Heart right ventricle (tissue), 16 donors: ENCODE measurements at regions of chr9 and their contacts with region 1.

Region 1: DNA sequence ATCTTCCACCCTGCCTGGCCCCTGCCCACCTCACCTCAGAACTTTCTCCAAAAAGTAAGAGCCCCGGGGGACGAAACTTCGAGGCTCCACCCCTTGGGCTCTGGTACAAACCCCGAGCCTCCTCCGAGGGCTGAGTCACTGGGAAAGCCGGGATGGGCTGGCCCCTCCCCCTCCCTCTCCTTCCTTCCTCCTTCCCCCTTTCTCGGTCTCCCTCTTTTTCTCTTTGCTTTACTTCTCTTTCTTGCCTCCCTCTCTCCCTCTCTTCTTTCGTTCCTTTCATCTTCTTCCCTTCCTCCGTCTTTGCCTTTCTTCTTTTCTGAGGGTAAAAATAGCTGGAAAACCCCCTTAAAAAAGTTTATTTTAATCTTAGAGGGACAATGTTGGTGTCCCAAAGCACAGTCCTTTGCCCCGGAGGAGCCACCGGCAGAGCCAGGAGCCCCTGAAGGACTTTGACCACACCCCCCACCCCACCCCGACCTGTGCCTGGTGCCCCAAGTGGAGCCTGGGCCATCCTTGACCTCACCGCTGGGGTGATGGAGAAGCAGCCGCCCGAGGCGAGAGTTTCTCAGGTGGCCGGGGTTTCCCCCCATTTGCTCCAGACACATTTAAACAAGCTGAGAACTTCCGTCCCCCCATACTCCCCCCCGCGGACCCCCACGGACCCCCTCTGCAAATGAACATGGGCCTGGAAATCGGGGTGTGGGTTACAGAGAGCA is 5.7 kb upstream of the NOTCH1 start:
- DNase-seq: peak; percentile 78 to 79
- ATAC-seq: peak in 6 of 8 donors; percentile 27 to 50 (median 36)
- H3K4me3 ChIP-seq: peak overlapping the region in 3 of 10 donors; percentile 19 to 24 (median 22)
- H3K27ac ChIP-seq: peak overlapping the region in 8 of 10 donors; percentile 11 to 88 (median 68)
- H3K4me1 ChIP-seq: peaks cover 8 to 54% (median 38%) of the 10 kb centered on the region in 9 donors
- H3K27me3 ChIP-seq: no peaks in the 10 kb centered on the region
- CTCF ChIP-seq: no peak

Region 2: GRCh38 chr9:136109351-136110081 is 442.0 kb before region 1 on chr9:
- intact Hi-C with region 1: no loop called
- DNase-seq: peak; percentile 92 to 94
- ATAC-seq: peak; percentile 88 to 94 (median 91)
- H3K4me3 ChIP-seq: peak overlapping the region in 9 of 10 donors; percentile 18 to 51 (median 44)
- H3K27ac ChIP-seq: peak overlapping the region; percentile 37 to 91 (median 80)
- H3K4me1 ChIP-seq: peaks cover 32 to 76% (median 61%) of the 10 kb centered on the region in 9 donors
- H3K27me3 ChIP-seq: peaks cover 0 to 5% (median 0%) of the 10 kb centered on the region in 7 donors
- CTCF ChIP-seq: peak in 5 of 9 donors; percentile 4 to 39 (median 15)

Region 3: DNA sequence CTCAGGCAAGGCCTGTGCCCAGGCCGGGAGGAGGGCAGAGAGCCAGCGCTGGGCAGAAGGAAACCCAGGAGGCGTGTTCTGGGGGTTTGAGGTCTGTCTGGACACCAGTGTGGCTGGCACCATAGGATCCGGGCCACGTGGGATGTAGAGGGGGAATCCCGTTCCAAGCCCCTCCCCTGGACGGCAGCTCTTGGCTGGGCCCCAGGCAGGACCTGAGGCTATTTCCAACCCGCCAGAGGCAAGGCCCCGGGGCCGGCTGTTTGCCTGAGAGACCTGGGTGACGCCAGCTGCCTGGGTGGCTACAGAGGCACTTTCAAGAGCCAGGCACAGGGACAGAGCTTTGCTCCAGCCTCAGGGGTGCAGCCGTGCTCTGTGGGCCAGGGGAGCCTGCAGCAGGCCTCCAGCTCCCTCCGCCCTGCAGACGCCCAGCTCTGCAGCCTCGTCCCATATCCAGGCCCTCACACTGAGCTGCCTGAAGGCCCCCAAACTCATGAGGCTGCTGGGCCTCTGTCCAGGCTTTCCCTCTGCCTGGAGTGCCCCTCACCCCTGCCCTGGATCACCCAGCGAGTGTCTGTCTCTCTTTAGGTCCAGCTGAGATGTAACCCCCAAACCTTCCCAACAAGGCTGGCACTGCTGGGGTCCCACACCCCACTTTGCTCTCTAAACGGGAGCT is 54.6 kb after region 1 on chr9:
- intact Hi-C with region 1: loop called in 3 of 10 experiments (anchors 5 to 10 kb)
- DNase-seq: peak; percentile 54 to 81
- ATAC-seq: peak in 7 of 8 donors; percentile 8 to 69 (median 56)
- H3K4me3 ChIP-seq: no peak overlapping the region
- H3K27ac ChIP-seq: peak overlapping the region in 8 of 10 donors; percentile 6 to 81 (median 34)
- H3K4me1 ChIP-seq: peaks cover 6 to 47% (median 39%) of the 10 kb centered on the region in 9 donors
- H3K27me3 ChIP-seq: no peaks in the 10 kb centered on the region
- CTCF ChIP-seq: no peak